ENCODE measurements at regions of chr3 and their contacts with region 1.

Region 1: DNA sequence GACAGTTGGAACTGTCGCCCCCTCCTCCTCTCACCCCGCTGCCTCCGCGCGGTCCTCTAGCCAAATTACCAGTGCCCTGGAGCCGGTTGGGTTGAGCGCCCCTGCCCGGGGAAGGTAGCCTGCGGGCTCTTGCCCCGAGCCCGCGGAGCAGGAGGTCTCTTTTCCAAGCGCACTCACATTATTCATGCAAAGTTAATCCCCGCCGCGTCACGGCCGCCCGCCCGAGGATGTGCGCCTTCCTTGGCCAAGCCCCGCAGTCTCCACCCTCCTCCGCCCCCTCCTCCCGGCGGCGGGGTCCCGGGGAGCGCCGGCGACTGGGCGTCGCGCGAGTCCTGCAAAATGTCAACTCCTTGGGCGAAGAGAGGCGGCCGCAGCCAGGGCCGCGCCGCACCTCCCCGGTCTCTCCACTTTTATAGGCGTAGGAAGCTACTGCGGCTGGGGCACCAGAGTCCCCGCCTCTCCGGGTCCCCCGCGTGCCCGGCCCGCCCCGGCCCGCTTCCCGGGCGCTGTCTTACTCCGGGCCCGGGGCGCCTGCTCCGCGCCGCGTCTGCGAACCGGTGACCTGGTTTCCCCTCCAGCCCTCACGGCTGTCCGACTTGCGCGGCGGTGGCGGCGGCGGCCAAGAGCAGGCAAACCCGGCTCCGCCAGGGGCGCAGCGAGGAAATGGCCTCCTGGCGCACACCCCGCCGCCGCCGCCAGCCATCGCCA is at the start of gene THRB:
- DNase-seq: no peak
- H3K4me3 ChIP-seq: peak within 1 kb of the TSS; percentile 80 to 93 (median 86)
- H3K27ac ChIP-seq: peak within 1 kb of the TSS; percentile 92 to 97 (median 96)
- H3K4me1 ChIP-seq: peaks cover 24 to 56% (median 51%) of the 10 kb centered on the region in 4 donors
- H3K27me3 ChIP-seq: no peaks in the 10 kb centered on the region
- CTCF ChIP-seq: peak in 1 of 3 experiments; percentile 52
- EP300 ChIP-seq: no peak
- POLR2A ChIP-seq: peak; percentile 62
- total RNA-seq, gene THRB: 31.5 to 68.6 (median 39.3) TPM

Region 2: DNA sequence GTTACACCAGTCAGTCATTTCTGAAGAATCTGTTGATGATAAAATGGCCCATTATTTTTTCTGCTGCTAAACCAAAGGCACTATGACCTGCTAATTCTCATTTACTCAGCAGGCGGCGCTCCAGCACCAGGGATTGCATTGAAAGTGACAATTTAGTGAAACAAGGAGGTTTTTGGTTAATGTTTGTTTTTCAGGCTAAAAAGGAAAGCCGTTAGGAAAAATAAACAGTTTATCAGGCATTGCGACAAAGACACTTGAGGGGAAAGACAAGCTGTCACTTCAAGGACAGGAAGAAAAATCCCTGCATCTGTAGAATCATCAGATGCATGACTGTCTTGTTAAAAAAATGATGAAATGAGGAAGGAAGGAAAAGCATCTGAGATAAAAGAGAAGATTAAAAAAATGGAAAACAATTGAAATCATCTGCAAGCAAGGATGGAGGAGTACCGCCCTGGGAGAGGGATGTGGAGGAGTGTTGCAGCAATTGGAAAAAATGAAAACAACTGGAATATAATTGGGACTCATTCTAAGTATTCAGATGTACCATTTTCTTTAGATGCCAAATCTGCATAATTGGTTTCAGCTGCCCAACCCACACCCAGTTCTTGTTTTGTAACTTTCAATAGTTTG is 495.6 kb before region 1 on chr3:
- intact Hi-C with region 1: loop called (anchors 5 kb)
- DNase-seq: no peak
- H3K4me3 ChIP-seq: peak overlapping the region in 1 of 4 donors; percentile 15
- H3K27ac ChIP-seq: no peak overlapping the region
- H3K4me1 ChIP-seq: peaks cover 7 to 13% (median 11%) of the 10 kb centered on the region in 4 donors
- H3K27me3 ChIP-seq: no peaks in the 10 kb centered on the region
- CTCF ChIP-seq: peak; percentile 90 to 96 (median 91)
- EP300 ChIP-seq: no peak
- POLR2A ChIP-seq: no peak

Region 3: DNA sequence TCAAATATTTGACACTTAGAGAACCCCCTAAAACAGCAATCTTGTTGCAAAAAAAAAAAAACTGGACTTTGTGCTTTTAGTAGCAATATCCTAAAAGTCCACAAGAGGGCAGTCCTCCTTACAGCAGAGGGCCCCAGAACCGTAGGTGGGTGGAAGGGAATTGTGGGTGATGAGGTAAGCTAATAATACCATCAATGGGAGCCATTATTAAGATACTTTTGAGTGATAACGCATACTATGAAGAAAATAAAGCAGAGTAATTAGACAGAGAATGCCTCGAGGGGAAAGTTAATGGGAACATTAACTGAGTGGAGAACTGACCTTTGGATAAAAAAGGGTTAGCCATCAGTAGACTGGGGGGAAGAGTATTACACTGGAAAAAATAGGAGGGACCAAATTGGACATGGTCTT is 230.0 kb before region 1 on chr3:
- intact Hi-C with region 1: loop called (anchors 5 kb)
- DNase-seq: no peak
- H3K4me3 ChIP-seq: no peak overlapping the region
- H3K27ac ChIP-seq: no peak overlapping the region
- H3K4me1 ChIP-seq: peaks cover 18 to 28% (median 23%) of the 10 kb centered on the region in 4 donors
- H3K27me3 ChIP-seq: no peaks in the 10 kb centered on the region
- CTCF ChIP-seq: peak; percentile 62 to 76 (median 73)
- EP300 ChIP-seq: no peak
- POLR2A ChIP-seq: no peak

Region 4: DNA sequence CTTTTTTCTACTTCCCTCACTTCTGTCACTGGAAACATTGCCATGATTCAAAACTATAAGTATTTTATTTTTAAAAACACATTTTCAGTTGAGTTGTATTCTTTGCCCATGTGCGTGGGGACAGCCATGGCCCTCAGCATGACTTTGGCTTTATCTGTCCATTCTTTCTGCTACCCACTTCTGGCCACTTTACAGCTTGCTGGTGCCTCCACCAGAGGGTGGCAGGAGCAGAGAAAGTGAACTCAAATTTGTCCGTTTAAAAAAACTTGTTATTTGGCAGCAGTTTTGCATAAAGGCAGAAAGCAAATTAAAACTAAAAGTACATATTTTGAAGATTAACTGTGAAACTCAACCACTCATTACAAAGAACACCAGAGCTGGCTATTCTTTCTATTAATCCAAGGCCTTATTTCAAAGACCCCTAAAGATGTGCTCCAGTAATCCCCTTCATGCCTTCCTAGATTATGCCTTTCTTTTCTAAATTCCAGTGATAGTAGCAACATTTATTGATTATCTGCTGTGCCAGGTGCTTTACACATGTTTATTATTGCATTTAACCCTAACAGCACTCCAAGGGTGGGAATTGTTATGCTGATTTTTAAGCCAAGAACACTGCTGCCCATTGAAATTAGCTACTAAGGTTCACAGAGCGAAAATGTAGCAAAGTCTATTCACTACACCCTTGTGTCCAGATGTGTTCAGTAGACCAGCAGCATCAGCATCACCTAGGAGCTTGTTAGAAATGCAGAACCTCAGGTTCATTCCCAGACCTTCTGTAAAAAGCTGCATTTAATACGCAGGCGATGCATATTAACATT is 134.9 kb before region 1 on chr3:
- intact Hi-C with region 1: loop called (anchors 5 kb)
- DNase-seq: no peak
- H3K4me3 ChIP-seq: no peak overlapping the region
- H3K27ac ChIP-seq: no peak overlapping the region
- H3K4me1 ChIP-seq: peaks cover 14 to 47% (median 41%) of the 10 kb centered on the region in 4 donors
- H3K27me3 ChIP-seq: no peaks in the 10 kb centered on the region
- CTCF ChIP-seq: peak; percentile 29 to 42 (median 35)
- EP300 ChIP-seq: no peak
- POLR2A ChIP-seq: no peak